GM12878 (cell line): ENCODE measurements at regions of chr17 and their contacts with region 1.

Region 1: DNA sequence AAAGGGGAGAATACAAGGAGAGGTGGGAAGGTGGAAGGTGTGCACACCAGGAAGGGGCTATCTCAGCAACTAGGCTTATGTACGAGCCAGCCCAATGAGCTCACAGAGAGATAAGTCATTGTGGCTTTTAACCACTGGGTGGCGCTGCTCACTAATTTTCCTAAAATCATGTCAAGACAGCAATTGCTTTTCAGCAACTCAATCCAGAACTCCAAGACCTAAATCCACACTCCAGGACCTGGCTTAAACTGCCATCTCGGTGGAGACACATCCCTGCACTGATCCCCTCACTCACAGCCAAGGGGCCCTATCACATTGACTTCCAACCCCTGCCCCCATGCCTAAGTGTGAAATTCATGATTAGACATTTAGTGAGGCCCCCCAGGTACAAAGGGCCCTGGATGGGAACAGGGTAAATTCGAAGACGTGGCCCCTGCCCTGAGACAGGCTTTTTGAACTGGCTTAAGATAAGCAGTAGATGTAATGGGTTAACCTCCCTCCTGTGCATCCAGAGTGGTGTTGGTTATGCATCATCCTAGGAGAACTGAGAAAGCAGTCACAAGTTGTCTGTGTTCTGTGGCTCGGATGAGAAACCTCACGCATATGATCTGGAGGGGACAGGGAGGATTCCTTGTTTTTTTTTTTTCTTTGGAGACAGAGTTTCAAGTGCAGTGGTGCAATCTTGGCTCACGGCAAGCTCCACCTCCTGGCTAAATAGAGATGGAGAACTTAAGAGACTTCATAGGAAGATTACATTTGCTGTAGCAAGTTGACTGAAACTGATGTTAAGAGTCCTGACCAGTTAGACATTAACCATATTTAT is 11.5 kb downstream of the CCL16 start:
- DNase-seq: peak; percentile 45
- ATAC-seq: peak; percentile 92
- H3K4me3 ChIP-seq: no peak overlapping the region
- H3K27ac ChIP-seq: no peak overlapping the region
- H3K4me1 ChIP-seq: no peaks in the 10 kb centered on the region
- H3K27me3 ChIP-seq: no peaks in the 10 kb centered on the region
- CTCF ChIP-seq: peak; percentile 77 to 92 (median 86); a peak in 5 of 6 replicates
- EP300 ChIP-seq: no peak
- POLR2A ChIP-seq: no peak
- RAD21 ChIP-seq: peak; percentile 95

Region 2: GRCh38 chr17:35947156-35947585 is 22.6 kb before region 1 on chr17:
- CTCF ChIA-PET with region 1: interaction called, 24 read pairs
- POLR2A ChIA-PET with region 1: interaction called, 3 read pairs
- RAD21 ChIA-PET with region 1: interaction called, 8 read pairs
- SMC1A ChIA-PET with region 1: interaction called, 18 read pairs
- in situ Hi-C with region 1: no loop called
- intact Hi-C with region 1: no loop called
- DNase-seq: no peak
- ATAC-seq: peak; percentile 98
- H3K4me3 ChIP-seq: no peak overlapping the region
- H3K27ac ChIP-seq: no peak overlapping the region
- H3K4me1 ChIP-seq: no peaks in the 10 kb centered on the region
- H3K27me3 ChIP-seq: no peaks in the 10 kb centered on the region; a peak in 1 of 4 replicates
- CTCF ChIP-seq: peak; percentile 84 to 97 (median 96)
- EP300 ChIP-seq: no peak
- POLR2A ChIP-seq: no peak
- RAD21 ChIP-seq: peak; percentile 89

Region 3: GRCh38 chr17:35981908-35982330 is 12.2 kb after region 1 on chr17:
- CTCF ChIA-PET with region 1: interaction called, 12 read pairs
- POLR2A ChIA-PET with region 1: interaction called, 3 read pairs
- RAD21 ChIA-PET with region 1: interaction called, 12 read pairs
- SMC1A ChIA-PET with region 1: interaction called, 11 read pairs
- in situ Hi-C with region 1: no loop called
- intact Hi-C with region 1: no loop called
- DNase-seq: no peak
- ATAC-seq: peak; percentile 49
- H3K4me3 ChIP-seq: no peak overlapping the region
- H3K27ac ChIP-seq: no peak overlapping the region
- H3K4me1 ChIP-seq: peaks cover 6% of the 10 kb centered on the region; the same call in 1 of the 2 replicates
- H3K27me3 ChIP-seq: no peaks in the 10 kb centered on the region
- CTCF ChIP-seq: peak; percentile 36 to 46 (median 39); a peak in 5 of 6 replicates
- EP300 ChIP-seq: no peak
- POLR2A ChIP-seq: no peak
- RAD21 ChIP-seq: peak; percentile 71

Region 4: GRCh38 chr17:36008998-36009665 is 39.4 kb after region 1 on chr17:
- CTCF ChIA-PET with region 1: interaction called, 24 read pairs
- POLR2A ChIA-PET with region 1: no interaction called
- RAD21 ChIA-PET with region 1: interaction called, 5 read pairs
- SMC1A ChIA-PET with region 1: interaction called, 11 read pairs
- in situ Hi-C with region 1: no loop called
- intact Hi-C with region 1: no loop called
- DNase-seq: no peak
- ATAC-seq: peak; percentile 77
- H3K4me3 ChIP-seq: no peak overlapping the region; the same call in 1 of the 2 replicates
- H3K27ac ChIP-seq: no peak overlapping the region
- H3K4me1 ChIP-seq: no peaks in the 10 kb centered on the region
- H3K27me3 ChIP-seq: no peaks in the 10 kb centered on the region
- CTCF ChIP-seq: peak; percentile 4 to 51 (median 47); a peak in 4 of 6 replicates
- EP300 ChIP-seq: no peak
- POLR2A ChIP-seq: no peak
- RAD21 ChIP-seq: no peak

Region 5: GRCh38 chr17:36133602-36134236 is 163.9 kb after region 1 on chr17:
- CTCF ChIA-PET with region 1: interaction called, 14 read pairs
- POLR2A ChIA-PET with region 1: no interaction called
- RAD21 ChIA-PET with region 1: interaction called, 4 read pairs
- SMC1A ChIA-PET with region 1: interaction called, 9 read pairs
- in situ Hi-C with region 1: no loop called
- intact Hi-C with region 1: no loop called
- DNase-seq: no peak
- ATAC-seq: no peak
- H3K4me3 ChIP-seq: no peak overlapping the region
- H3K27ac ChIP-seq: no peak overlapping the region
- H3K4me1 ChIP-seq: peaks cover 29% of the 10 kb centered on the region
- H3K27me3 ChIP-seq: no peaks in the 10 kb centered on the region
- CTCF ChIP-seq: no peak
- EP300 ChIP-seq: no peak
- POLR2A ChIP-seq: no peak
- RAD21 ChIP-seq: no peak